A549 (cell line): ENCODE measurements at regions of chr3 and their contacts with region 1.

Region 1: GRCh38 chr3:9736831-9737230 is 5.3 kb downstream of the BRPF1 start:
- DNase-seq: no peak
- ATAC-seq: no peak
- H3K4me3 ChIP-seq: no peak overlapping the region
- H3K27ac ChIP-seq: no peak overlapping the region
- H3K4me1 ChIP-seq: peaks cover 12% of the 10 kb centered on the region
- CTCF ChIP-seq: no peak
- EP300 ChIP-seq: no peak
- POLR2A ChIP-seq: no peak
- RAD21 ChIP-seq: no peak

Region 2: DNA sequence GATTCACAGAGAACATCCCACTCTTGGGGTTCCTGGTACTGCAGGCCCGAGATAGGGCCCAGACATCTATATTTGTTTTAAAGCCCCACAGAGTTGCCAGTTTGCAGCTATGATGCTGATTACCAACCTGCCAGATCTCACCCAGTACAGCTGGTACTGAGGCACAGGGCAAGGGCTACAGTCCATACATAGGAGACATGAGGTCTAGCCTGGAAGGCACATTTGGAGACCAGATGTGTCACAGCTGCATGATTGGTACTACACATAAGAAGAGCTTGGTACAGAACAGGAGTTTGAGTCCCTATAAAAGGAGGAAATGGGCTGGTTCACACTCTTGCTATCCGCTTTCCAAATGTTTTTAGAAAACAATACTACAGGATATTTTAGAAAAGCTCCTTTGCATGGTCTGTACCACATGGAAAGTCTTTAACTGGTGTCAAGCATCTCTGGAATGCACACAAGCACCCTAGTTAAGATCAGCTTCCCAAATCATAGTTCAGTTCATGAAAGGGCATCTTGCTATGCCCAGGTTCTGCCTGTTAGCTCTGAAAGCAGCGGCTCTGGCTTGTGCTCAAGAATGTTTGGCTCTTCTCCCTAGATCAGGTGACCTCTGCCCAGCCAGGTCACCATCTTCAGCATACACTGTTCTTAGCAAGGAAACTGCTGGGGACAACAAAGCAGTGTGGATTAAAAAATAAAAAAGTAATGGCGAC is 67.0 kb before region 1 on chr3:
- CTCF ChIA-PET with region 1: no interaction called
- POLR2A ChIA-PET with region 1: no interaction called
- DNase-seq: no peak
- ATAC-seq: no peak; a peak in 1 of 6 replicates
- H3K4me3 ChIP-seq: no peak overlapping the region
- H3K27ac ChIP-seq: no peak overlapping the region
- H3K4me1 ChIP-seq: no peaks in the 10 kb centered on the region
- CTCF ChIP-seq: no peak
- EP300 ChIP-seq: no peak
- POLR2A ChIP-seq: no peak
- RAD21 ChIP-seq: no peak

Region 3: GRCh38 chr3:9749645-9750555 is 13.1 kb after region 1 on chr3 and contains the start of gene OGG1:
- CTCF ChIA-PET with region 1: interaction called, 18 read pairs
- POLR2A ChIA-PET with region 1: interaction called, 17 read pairs
- DNase-seq: peak; percentile 98 to 99
- ATAC-seq: peak; percentile 95 to 98
- H3K4me3 ChIP-seq: peak within 1 kb of the TSS; percentile 72
- H3K27ac ChIP-seq: peak within 1 kb of the TSS; percentile 95 to 97
- H3K4me1 ChIP-seq: peaks cover 13% of the 10 kb centered on the region; the same call in 2 of the 3 replicates
- CTCF ChIP-seq: no peak
- EP300 ChIP-seq: no peak
- POLR2A ChIP-seq: peak; percentile 50
- RAD21 ChIP-seq: no peak; a peak in 1 of 5 replicates
- polyA plus RNA-seq, gene OGG1: 21.2 and 21.6 TPM in 2 replicates

Region 4: DNA sequence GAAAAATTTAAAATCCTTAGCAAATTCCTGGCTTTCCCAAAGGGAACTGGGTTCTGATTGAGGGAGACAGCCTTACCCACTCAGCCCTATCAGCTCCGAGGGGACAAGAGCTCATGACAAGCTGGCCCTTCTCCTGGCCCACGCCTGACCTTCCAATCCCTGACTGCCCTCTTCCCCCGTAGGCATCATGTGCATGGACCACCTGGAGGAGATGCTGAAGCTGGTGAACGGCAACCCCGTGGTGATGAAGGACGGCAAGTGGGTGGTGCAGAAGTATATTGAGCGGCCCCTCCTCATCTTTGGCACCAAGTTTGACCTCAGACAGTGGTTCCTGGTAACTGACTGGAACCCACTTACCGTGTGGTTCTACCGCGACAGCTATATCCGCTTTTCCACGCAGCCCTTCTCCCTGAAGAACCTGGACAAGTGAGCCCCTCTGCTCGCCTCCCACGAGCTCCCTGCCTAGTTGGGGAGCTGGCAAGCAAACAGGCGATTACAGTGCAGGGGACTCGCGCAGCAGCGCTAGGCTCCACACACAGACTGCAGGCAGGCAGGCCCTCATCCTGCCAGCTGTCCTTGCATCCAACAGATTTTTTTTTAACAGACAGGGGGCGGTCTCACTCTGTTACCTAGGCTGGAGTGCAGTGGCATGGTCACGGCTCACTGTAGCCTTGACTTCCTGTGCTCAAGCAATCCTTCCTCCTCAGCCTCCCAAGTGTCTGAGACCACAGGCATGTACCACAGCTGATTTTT is 90.2 kb after region 1 on chr3:
- CTCF ChIA-PET with region 1: no interaction called
- POLR2A ChIA-PET with region 1: no interaction called
- DNase-seq: peak; percentile 44 to 69
- ATAC-seq: peak; percentile 87 to 93
- H3K4me3 ChIP-seq: no peak overlapping the region
- H3K27ac ChIP-seq: no peak overlapping the region
- H3K4me1 ChIP-seq: no peaks in the 10 kb centered on the region
- CTCF ChIP-seq: peak; percentile 46
- EP300 ChIP-seq: no peak
- POLR2A ChIP-seq: no peak
- RAD21 ChIP-seq: peak; percentile 52 to 67